OCI-LY7 (cell line): ENCODE measurements at regions of chr12 and their contacts with region 1.

Region 1: GRCh38 chr12:68899251-68899771 is 33.7 kb downstream of the CPM start:
- DNase-seq: no peak
- H3K4me3 ChIP-seq: no peak overlapping the region
- H3K27ac ChIP-seq: no peak overlapping the region
- H3K4me1 ChIP-seq: peaks cover 55% of the 10 kb centered on the region
- CTCF ChIP-seq: no peak

Region 2: GRCh38 chr12:68880660-68881325 is 18.5 kb before region 1 on chr12:
- CTCF ChIA-PET with region 1: interaction called, 3 read pairs
- POLR2A ChIA-PET with region 1: interaction called, 81 read pairs
- intact Hi-C with region 1: no loop called
- DNase-seq: no peak
- H3K4me3 ChIP-seq: no peak overlapping the region
- H3K27ac ChIP-seq: no peak overlapping the region
- H3K4me1 ChIP-seq: peaks cover 55% of the 10 kb centered on the region
- CTCF ChIP-seq: no peak

Region 3: GRCh38 chr12:69000540-69001243 is 101.4 kb after region 1 on chr12:
- CTCF ChIA-PET with region 1: no interaction called
- POLR2A ChIA-PET with region 1: interaction called, 11 read pairs
- intact Hi-C with region 1: no loop called
- DNase-seq: no peak
- H3K4me3 ChIP-seq: no peak overlapping the region
- H3K27ac ChIP-seq: no peak overlapping the region
- H3K4me1 ChIP-seq: no peaks in the 10 kb centered on the region
- CTCF ChIP-seq: no peak